ENCODE measurements at regions of chr18 and their contacts with region 1.

Region 1: DNA sequence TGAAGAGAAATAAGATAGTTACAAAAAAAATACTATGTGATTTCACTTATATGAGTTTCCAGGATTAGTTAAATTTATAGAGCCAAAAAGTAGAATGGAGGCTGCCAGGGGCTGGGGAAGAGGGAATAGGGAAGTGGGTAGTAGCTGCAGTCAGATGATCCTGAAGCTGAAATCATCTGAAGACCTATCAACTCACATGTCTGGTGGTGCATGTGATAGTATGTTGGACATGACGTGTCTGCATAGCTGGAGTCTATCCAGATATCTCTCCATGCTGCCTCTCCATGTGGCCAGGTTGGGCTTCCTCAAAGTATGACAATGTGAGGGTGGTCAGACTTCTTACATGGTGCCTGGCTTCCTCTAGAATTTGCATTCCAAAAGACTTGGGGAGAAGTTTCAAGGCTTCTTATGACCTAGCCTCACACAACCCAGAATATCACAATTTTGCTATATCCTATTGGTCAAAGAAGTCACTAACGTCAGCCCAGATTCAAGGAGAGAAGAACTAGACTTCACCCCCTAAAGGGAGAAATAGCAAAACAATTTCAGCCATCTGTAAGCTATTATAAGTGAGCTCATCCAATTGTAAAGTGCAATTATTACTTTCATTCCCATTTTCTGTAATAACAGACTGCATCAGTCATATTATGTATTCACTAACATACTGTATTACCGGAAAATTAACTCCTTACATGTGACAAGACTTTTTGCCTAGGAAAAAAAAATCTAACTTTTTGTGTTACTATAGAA is 14.0 kb upstream of the ZNF396 start:
- DNase-seq: no peak
- ATAC-seq: no peak

Region 2: GRCh38 chr18:35296060-35296459 is 95.1 kb before region 1 on chr18:
- intact Hi-C with region 1: no loop called
- DNase-seq: no peak
- ATAC-seq: no peak

Region 3: GRCh38 chr18:35343936-35344735 is 47.0 kb before region 1 on chr18 and contains the start of gene ZNF24:
- intact Hi-C with region 1: no loop called
- DNase-seq: peak; percentile 98
- ATAC-seq: peak; percentile 99
- total RNA-seq, gene ZNF24: 71.0 TPM

Region 4: GRCh38 chr18:35939138-35939537 is 548.0 kb after region 1 on chr18:
- intact Hi-C with region 1: loop called (anchors 10 kb)
- DNase-seq: no peak
- ATAC-seq: no peak